Endothelial cell of umbilical vein (primary cell): ENCODE measurements at regions of chr11 and their contacts with region 1.

Region 1: GRCh38 chr11:110376711-110377324 is 52.9 kb upstream of the FDX1 start:
- DNase-seq: peak; percentile 93
- H3K4me3 ChIP-seq: no peak overlapping the region
- H3K27ac ChIP-seq: no peak overlapping the region
- H3K4me1 ChIP-seq: peaks cover 24% of the 10 kb centered on the region
- H3K27me3 ChIP-seq: no peaks in the 10 kb centered on the region
- CTCF ChIP-seq: peak; percentile 52 to 72
- POLR2A ChIP-seq: no peak

Region 2: GRCh38 chr11:109859045-109859724 is 517.6 kb before region 1 on chr11:
- CTCF ChIA-PET with region 1: no interaction called
- POLR2A ChIA-PET with region 1: no interaction called
- dilution Hi-C with region 1: no loop called
- intact Hi-C with region 1: loop called (anchors 1 kb)
- DNase-seq: peak; percentile 61
- H3K4me3 ChIP-seq: no peak overlapping the region
- H3K27ac ChIP-seq: no peak overlapping the region
- H3K4me1 ChIP-seq: peaks cover 11% of the 10 kb centered on the region
- H3K27me3 ChIP-seq: no peaks in the 10 kb centered on the region
- CTCF ChIP-seq: no peak
- POLR2A ChIP-seq: no peak

Region 3: GRCh38 chr11:109971184-109971523 is 405.7 kb before region 1 on chr11:
- CTCF ChIA-PET with region 1: no interaction called
- POLR2A ChIA-PET with region 1: no interaction called
- dilution Hi-C with region 1: no loop called
- intact Hi-C with region 1: no loop called
- DNase-seq: peak; percentile 94
- H3K4me3 ChIP-seq: peak overlapping the region in 1 of 3 experiments; percentile 53
- H3K27ac ChIP-seq: peak overlapping the region; percentile 76
- H3K4me1 ChIP-seq: peaks cover 23% of the 10 kb centered on the region
- H3K27me3 ChIP-seq: no peaks in the 10 kb centered on the region
- CTCF ChIP-seq: no peak
- POLR2A ChIP-seq: no peak

Region 4: GRCh38 chr11:110173811-110174644 is 202.8 kb before region 1 on chr11:
- CTCF ChIA-PET with region 1: no interaction called
- POLR2A ChIA-PET with region 1: no interaction called
- dilution Hi-C with region 1: no loop called
- intact Hi-C with region 1: loop called (anchors 1 kb)
- DNase-seq: peak; percentile 77
- H3K4me3 ChIP-seq: peak overlapping the region in 1 of 3 experiments; percentile 34
- H3K27ac ChIP-seq: no peak overlapping the region
- H3K4me1 ChIP-seq: peaks cover 7% of the 10 kb centered on the region
- H3K27me3 ChIP-seq: no peaks in the 10 kb centered on the region
- CTCF ChIP-seq: peak; percentile 87 to 92
- POLR2A ChIP-seq: no peak

Region 5: GRCh38 chr11:110392056-110392455 is 15.2 kb after region 1 on chr11:
- CTCF ChIA-PET with region 1: interaction called, 7 read pairs
- POLR2A ChIA-PET with region 1: no interaction called
- dilution Hi-C with region 1: no loop called
- intact Hi-C with region 1: loop called (anchors 2 kb)
- DNase-seq: no peak
- H3K4me3 ChIP-seq: no peak overlapping the region
- H3K27ac ChIP-seq: no peak overlapping the region
- H3K4me1 ChIP-seq: no peaks in the 10 kb centered on the region
- H3K27me3 ChIP-seq: peaks cover 0 to 2% of the 10 kb centered on the region in 2 experiments
- CTCF ChIP-seq: no peak
- POLR2A ChIP-seq: no peak

Region 6: GRCh38 chr11:110429731-110430266 is 53.0 kb after region 1 on chr11 and contains the start of gene FDX1:
- CTCF ChIA-PET with region 1: interaction called, 5 read pairs
- POLR2A ChIA-PET with region 1: no interaction called
- dilution Hi-C with region 1: no loop called
- intact Hi-C with region 1: loop called (anchors 1 kb)
- DNase-seq: peak; percentile 84
- H3K4me3 ChIP-seq: peak within 1 kb of the TSS; percentile 23 to 75 (median 57)
- H3K27ac ChIP-seq: peak within 1 kb of the TSS; percentile 72
- H3K4me1 ChIP-seq: peaks cover 27% of the 10 kb centered on the region
- H3K27me3 ChIP-seq: no peaks in the 10 kb centered on the region
- CTCF ChIP-seq: peak; percentile 50 to 59
- POLR2A ChIP-seq: no peak
- total RNA-seq, gene FDX1: 9.9 and 11.0 TPM in 2 replicates